ENCODE measurements at regions of chr7 and their contacts with region 1.

Region 1: GRCh38 chr7:148962823-148963582 is 65.3 kb downstream of the PDIA4 start:
- DNase-seq: peak; percentile 79
- H3K4me3 ChIP-seq: peak overlapping the region; percentile 54
- H3K27ac ChIP-seq: peak overlapping the region; percentile 86
- H3K4me1 ChIP-seq: no peaks in the 10 kb centered on the region
- H3K27me3 ChIP-seq: no peaks in the 10 kb centered on the region
- CTCF ChIP-seq: peak; percentile 93

Region 2: GRCh38 chr7:148262721-148263229 is 700.2 kb before region 1 on chr7:
- CTCF ChIA-PET with region 1: interaction called, 3 read pairs
- POLR2A ChIA-PET with region 1: no interaction called
- intact Hi-C with region 1: loop called (anchors 2 kb)
- DNase-seq: peak; percentile 75
- H3K4me3 ChIP-seq: peak overlapping the region; percentile 17
- H3K27ac ChIP-seq: no peak overlapping the region
- H3K4me1 ChIP-seq: peaks cover 5% of the 10 kb centered on the region
- H3K27me3 ChIP-seq: no peaks in the 10 kb centered on the region
- CTCF ChIP-seq: peak; percentile 98

Region 3: DNA sequence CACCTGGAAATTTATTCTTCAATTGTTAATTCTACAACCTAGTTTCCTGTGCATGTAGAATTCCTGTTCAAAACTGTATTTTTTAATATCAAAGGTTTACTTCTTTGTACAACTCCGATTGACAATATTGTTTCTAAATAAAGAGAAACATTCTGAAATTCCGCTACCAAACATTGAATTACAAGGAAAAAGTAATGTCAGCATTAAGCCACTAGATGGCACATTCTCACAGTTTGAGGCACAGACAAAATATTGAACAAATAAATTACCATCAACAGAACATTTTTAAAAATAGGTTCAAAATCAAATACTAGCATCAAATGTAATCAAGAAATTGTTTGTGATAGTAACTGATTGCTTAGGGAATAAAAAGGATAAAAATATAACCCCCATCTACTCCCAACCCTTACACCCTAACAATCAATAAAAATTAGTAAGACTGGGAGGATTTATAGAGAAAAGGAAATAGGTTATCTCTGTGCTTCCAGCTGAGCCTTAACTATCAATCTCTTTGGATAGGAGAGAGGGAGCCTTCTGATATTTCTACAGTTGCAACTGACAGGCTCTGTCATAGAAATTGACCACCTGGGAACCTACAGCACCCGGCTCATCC is 459.0 kb before region 1 on chr7:
- CTCF ChIA-PET with region 1: interaction called, 3 read pairs
- POLR2A ChIA-PET with region 1: no interaction called
- intact Hi-C with region 1: loop called (anchors 1 kb)
- DNase-seq: peak; percentile 57
- H3K4me3 ChIP-seq: no peak overlapping the region
- H3K27ac ChIP-seq: no peak overlapping the region
- H3K4me1 ChIP-seq: no peaks in the 10 kb centered on the region
- H3K27me3 ChIP-seq: no peaks in the 10 kb centered on the region
- CTCF ChIP-seq: peak; percentile 82

Region 4: GRCh38 chr7:148575640-148576411 is 387.2 kb before region 1 on chr7:
- CTCF ChIA-PET with region 1: no interaction called
- POLR2A ChIA-PET with region 1: no interaction called
- intact Hi-C with region 1: loop called (anchors 1 kb)
- DNase-seq: peak; percentile 83
- H3K4me3 ChIP-seq: no peak overlapping the region
- H3K27ac ChIP-seq: no peak overlapping the region
- H3K4me1 ChIP-seq: no peaks in the 10 kb centered on the region
- H3K27me3 ChIP-seq: no peaks in the 10 kb centered on the region
- CTCF ChIP-seq: peak; percentile 94

Region 5: GRCh38 chr7:148698397-148699023 is 264.5 kb before region 1 on chr7 and contains the start of gene CUL1:
- CTCF ChIA-PET with region 1: no interaction called
- POLR2A ChIA-PET with region 1: no interaction called
- intact Hi-C with region 1: loop called (anchors 10 kb)
- DNase-seq: peak; percentile 78
- H3K4me3 ChIP-seq: peak within 1 kb of the TSS; percentile 89
- H3K27ac ChIP-seq: peak within 1 kb of the TSS; percentile 97
- H3K4me1 ChIP-seq: peaks cover 40% of the 10 kb centered on the region
- H3K27me3 ChIP-seq: no peaks in the 10 kb centered on the region
- CTCF ChIP-seq: no peak
- total RNA-seq, gene CUL1: 75.5 and 75.7 TPM in 2 replicates

Region 6: DNA sequence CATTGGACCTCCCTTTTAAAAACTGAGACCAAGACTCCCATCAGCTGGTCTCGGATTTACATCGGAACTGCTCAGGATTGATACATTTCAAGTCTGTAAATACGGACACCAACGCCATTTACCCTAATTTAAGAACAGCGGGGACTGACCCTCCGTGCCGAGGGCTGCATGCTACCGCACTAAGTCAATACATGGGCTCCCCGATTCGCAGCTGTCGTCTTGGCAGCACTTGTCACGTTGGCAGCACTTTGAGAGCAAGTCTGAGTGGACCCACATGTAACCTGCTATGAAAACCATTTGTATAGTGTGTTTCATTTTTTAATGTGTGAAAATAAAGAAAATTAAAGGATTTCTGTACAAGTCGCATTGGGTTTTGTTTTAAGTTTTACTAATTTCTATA is 162.3 kb before region 1 on chr7:
- CTCF ChIA-PET with region 1: interaction called, 13 read pairs
- POLR2A ChIA-PET with region 1: no interaction called
- intact Hi-C with region 1: loop called (anchors 10 kb)
- DNase-seq: no peak
- H3K4me3 ChIP-seq: no peak overlapping the region
- H3K27ac ChIP-seq: no peak overlapping the region
- H3K4me1 ChIP-seq: no peaks in the 10 kb centered on the region
- H3K27me3 ChIP-seq: no peaks in the 10 kb centered on the region
- CTCF ChIP-seq: no peak

Region 7: DNA sequence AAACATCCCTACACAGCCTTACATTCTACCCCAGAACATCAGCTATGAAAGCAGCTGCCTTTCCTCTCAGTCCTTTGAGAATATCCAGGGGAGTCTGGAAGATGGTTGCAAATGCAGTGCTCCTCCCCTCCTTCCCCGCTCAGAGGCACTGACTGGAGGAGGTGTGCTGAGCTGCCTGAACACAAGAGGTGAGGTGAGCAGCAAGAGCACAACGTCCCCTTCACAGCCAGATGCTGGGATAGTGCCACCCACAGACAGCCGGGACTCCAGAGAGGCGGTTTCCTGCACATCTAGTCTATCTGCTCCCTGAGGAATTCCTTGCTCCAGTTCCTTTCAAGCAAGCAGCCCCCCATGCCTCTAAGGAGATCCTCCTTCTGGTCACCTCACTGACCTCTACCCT is 153.1 kb before region 1 on chr7:
- CTCF ChIA-PET with region 1: no interaction called
- POLR2A ChIA-PET with region 1: no interaction called
- intact Hi-C with region 1: loop called (anchors 10 kb)
- DNase-seq: no peak
- H3K4me3 ChIP-seq: no peak overlapping the region
- H3K27ac ChIP-seq: no peak overlapping the region
- H3K4me1 ChIP-seq: no peaks in the 10 kb centered on the region
- H3K27me3 ChIP-seq: no peaks in the 10 kb centered on the region
- CTCF ChIP-seq: no peak

Region 8: DNA sequence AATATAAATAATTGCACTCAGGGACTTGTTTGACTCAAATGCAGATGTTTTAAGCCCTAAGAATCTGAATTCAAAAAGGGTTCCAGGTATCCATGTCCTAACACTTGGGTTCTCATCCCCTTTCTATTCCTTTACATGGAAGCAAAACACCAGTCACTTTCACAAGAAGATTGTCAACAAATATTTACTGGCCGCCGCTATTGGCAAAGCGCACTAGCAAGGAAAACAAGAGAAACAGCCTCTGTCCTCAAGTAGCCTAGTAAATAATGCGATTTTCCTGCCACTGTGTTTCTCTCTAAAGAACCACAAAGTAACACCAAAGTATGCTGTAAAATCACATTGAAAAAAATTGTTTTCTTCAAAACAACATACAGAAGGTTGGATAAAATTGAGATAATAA is 12.2 kb before region 1 on chr7:
- CTCF ChIA-PET with region 1: no interaction called
- POLR2A ChIA-PET with region 1: no interaction called
- intact Hi-C with region 1: no loop called
- DNase-seq: no peak
- H3K4me3 ChIP-seq: no peak overlapping the region
- H3K27ac ChIP-seq: no peak overlapping the region
- H3K4me1 ChIP-seq: no peaks in the 10 kb centered on the region
- H3K27me3 ChIP-seq: no peaks in the 10 kb centered on the region
- CTCF ChIP-seq: no peak